WTC11 (cell line): ENCODE measurements at regions of chr2 and their contacts with region 1.

Region 1: GRCh38 chr2:238875101-238875470 is 27.2 kb downstream of the TWIST2 start:
- DNase-seq: peak; percentile 58
- ATAC-seq: no peak; the same call in 1 of the 2 replicates
- H3K4me3 Mint-ChIP-seq: no peak overlapping the region
- H3K27ac Mint-ChIP-seq: no peak overlapping the region
- H3K4me1 Mint-ChIP-seq: no peaks in the 10 kb centered on the region
- H3K27me3 Mint-ChIP-seq: no peaks in the 10 kb centered on the region
- CTCF ChIP-seq: peak; percentile 25; the same call in 1 of the 2 replicates

Region 2: DNA sequence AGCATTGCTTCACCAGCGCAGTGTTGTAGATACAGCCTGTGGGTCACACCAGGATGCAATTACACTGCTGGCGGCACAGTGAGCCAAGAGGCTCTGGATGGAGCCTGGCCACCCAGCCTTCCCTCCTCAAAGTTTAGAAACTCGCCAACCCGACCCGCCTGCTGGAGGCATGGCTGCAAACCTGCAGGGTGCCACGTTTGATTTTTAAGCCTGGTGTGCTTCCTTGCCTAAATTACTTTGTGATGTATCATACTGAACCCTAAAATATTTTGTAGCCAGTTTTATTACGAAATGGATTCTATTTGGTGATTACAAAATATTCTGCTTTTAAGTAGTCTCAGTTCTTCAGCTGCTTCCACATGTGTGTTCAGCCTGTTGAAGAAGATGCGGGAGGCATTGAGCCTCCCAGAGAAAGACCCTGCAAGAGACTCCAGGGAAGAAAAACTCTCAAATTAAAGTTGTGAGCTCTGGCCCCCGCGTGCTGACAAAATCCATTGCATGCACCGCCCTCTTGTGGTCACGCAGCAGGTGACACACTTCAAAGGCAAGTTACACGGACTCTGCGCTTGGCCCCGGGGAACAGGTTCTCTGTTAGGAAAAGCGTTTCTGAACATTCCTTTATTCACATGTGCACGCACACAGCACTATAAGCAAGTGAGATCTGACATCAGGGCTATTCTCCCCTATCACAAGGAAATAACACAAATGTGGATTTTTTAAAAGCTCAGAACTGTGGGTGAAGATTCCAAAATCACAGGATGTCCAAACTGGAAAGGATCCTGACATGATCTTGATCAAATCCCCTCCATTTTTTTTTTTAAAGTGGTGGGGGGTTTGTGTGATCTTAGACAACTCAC is 90.2 kb before region 1 on chr2:
- CTCF ChIA-PET with region 1: interaction called, 13 read pairs
- POLR2A ChIA-PET with region 1: no interaction called
- DNase-seq: peak; percentile 76
- ATAC-seq: peak; percentile 86
- H3K4me3 Mint-ChIP-seq: no peak overlapping the region
- H3K27ac Mint-ChIP-seq: no peak overlapping the region
- H3K4me1 Mint-ChIP-seq: peaks cover 16% of the 10 kb centered on the region
- H3K27me3 Mint-ChIP-seq: no peaks in the 10 kb centered on the region
- CTCF ChIP-seq: peak; percentile 78

Region 3: GRCh38 chr2:238847841-238848690 is 27.0 kb before region 1 on chr2 and contains the start of gene TWIST2:
- CTCF ChIA-PET with region 1: interaction called, 10 read pairs
- POLR2A ChIA-PET with region 1: no interaction called
- DNase-seq: peak; percentile 66
- ATAC-seq: peak; percentile 51
- H3K4me3 Mint-ChIP-seq: peak within 1 kb of the TSS; percentile 67
- H3K27ac Mint-ChIP-seq: no peak within 1 kb of the TSS
- H3K4me1 Mint-ChIP-seq: peaks cover 11% of the 10 kb centered on the region
- H3K27me3 Mint-ChIP-seq: peaks cover 81% of the 10 kb centered on the region
- CTCF ChIP-seq: no peak
- total RNA-seq, gene TWIST2: 4.1 to 5.7 TPM (median 5.1 TPM) in 3 replicates

Region 4: GRCh38 chr2:238886453-238887094 is 11.5 kb after region 1 on chr2:
- CTCF ChIA-PET with region 1: interaction called, 12 read pairs
- POLR2A ChIA-PET with region 1: no interaction called
- DNase-seq: no peak
- ATAC-seq: 0 out of 2 replicates have a peak, but pooled peaks have one; percentile 26
- H3K4me3 Mint-ChIP-seq: no peak overlapping the region
- H3K27ac Mint-ChIP-seq: no peak overlapping the region
- H3K4me1 Mint-ChIP-seq: no peaks in the 10 kb centered on the region
- H3K27me3 Mint-ChIP-seq: no peaks in the 10 kb centered on the region
- CTCF ChIP-seq: no peak

Region 5: GRCh38 chr2:238908960-238909951 is 34.2 kb after region 1 on chr2:
- CTCF ChIA-PET with region 1: interaction called, 10 read pairs
- POLR2A ChIA-PET with region 1: no interaction called
- DNase-seq: peak; percentile 26
- ATAC-seq: peak; percentile 48
- H3K4me3 Mint-ChIP-seq: no peak overlapping the region
- H3K27ac Mint-ChIP-seq: no peak overlapping the region
- H3K4me1 Mint-ChIP-seq: peaks cover 2% of the 10 kb centered on the region; the same call in 1 of the 2 replicates
- H3K27me3 Mint-ChIP-seq: no peaks in the 10 kb centered on the region; the same call in 1 of the 2 replicates
- CTCF ChIP-seq: no peak